K562 (cell line): ENCODE measurements at regions of chr5 and their contacts with region 1.

Region 1: GRCh38 chr5:33601881-33602280 is 161.1 kb downstream of the TARS1 start:
- DNase-seq: no peak
- ATAC-seq: no peak
- H3K4me3 ChIP-seq: no peak overlapping the region
- H3K27ac ChIP-seq: no peak overlapping the region
- H3K4me1 ChIP-seq: no peaks in the 10 kb centered on the region
- H3K27me3 ChIP-seq: no peaks in the 10 kb centered on the region; a peak in 1 of 5 replicates
- CTCF ChIP-seq: no peak
- EP300 ChIP-seq: no peak
- POLR2A ChIP-seq: no peak
- RAD21 ChIP-seq: no peak

Region 2: DNA sequence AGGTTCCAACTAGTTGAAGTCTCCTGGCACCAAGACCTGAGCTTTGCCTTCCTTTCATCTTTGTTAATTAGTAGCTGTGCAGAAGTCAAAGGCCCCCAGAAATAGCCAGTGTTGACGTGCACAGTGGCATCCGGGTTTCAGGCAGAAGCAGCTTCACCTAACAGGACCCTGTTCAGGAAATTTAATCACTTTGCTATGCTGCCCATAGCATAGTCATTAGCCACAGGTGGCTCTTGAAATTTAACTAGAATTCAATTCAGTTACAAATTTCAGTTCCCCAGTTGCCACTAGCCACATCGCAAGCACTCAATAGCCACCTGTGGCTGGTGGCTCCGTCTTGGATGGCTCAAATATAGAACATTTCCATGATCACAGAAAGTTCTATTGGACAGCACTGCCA is 1606.9 kb before region 1 on chr5:
- CTCF ChIA-PET with region 1: no interaction called
- POLR2A ChIA-PET with region 1: no interaction called
- in situ Hi-C with region 1: loop called (anchors 5 kb)
- intact Hi-C with region 1: no loop called
- DNase-seq: no peak
- ATAC-seq: no peak
- H3K4me3 ChIP-seq: no peak overlapping the region
- H3K27ac ChIP-seq: no peak overlapping the region
- H3K4me1 ChIP-seq: no peaks in the 10 kb centered on the region
- H3K27me3 ChIP-seq: peaks cover 37 to 59% of the 10 kb centered on the region in 2 experiments
- CTCF ChIP-seq: no peak
- EP300 ChIP-seq: no peak
- POLR2A ChIP-seq: no peak
- RAD21 ChIP-seq: no peak